ENCODE measurements at regions of chr19 and their contacts with region 1.

Region 1: DNA sequence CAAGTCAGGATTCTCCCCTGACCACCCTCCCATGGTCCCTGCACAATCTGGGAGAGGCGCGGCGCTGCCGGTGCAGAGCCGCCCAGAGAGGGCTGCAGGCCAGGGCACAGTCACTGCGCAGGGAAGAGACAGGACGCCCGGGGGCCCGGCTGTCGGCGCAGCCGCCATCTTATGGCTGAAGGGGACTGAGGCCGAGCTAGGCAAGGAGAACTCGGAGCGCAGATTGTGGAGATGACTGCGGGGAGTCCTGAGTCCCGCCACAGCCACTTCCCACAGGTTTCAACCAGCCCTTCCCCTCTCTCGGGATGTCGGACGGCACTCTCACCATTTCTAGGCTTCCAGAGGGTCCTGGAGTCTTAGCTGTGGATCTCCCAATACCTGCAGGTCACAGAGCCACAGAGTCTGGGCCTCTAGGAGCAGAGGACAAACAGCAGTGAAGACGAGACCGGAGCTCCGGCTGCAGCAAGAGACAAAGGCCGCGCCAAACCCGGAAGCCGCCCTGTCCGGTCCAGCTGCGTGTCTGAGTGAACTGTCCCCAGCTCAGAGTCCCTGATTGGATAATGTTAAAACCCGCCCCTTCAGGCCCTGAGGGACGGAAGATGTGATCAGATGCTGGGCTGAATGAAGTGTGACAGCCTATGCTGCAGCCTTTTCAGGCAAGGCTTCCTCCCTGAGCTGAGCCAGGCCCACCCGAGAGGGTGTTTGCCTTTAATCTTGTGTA is at the start of gene ZNF708:
- H3K4me3 ChIP-seq: peak within 1 kb of the TSS; percentile 88
- H3K27ac ChIP-seq: peak within 1 kb of the TSS; percentile 75
- H3K4me1 ChIP-seq: no peaks in the 10 kb centered on the region
- CTCF ChIP-seq: no peak

Region 2: DNA sequence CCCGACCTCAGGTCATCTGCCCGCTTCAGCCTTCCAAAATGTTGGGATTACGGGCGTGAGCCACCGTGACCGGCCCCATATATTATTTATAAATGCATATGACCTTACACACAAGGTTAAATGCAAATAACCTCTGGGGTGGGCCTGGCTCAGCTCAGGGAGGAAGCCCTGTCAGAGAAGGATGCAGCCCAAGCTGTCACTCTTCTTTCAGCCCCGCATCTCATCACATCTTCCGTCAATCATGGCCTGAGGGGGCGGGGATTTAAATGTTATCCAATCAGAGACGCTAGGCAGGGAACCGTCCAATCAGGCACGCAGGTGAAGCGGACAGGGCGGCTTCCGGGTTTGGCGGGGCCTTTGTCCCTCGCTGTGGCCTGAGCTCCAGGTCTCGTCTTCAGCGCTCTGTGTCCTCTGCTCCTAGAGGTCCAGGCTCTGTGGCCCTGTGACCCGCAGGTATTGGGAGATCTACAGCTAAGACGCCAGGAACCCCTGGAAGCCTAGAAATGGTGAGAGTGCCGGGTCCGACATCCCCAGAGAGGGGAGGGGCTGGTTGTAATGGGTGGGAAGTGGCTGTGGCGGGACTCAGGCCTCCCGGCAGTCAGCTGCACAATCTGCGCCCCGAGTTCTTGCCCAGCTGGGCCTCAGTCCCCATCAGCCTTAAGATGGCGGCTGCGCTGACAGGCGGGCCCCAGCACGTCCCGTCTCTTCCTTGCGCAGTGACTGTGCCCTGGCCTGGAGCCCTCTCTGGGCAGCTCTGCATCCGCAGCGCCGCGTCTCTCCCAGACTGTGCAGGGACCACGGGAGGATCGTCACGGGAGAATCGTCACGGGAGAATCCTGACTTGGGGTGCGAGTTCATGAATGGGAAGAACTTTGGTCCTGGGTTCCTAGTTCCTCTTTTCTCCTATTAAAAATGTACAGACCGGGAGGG is 308.5 kb before region 1 on chr19 and contains the start of gene ZNF430:
- CTCF ChIA-PET with region 1: no interaction called
- POLR2A ChIA-PET with region 1: interaction called, 12 read pairs
- H3K4me3 ChIP-seq: peak within 1 kb of the TSS; percentile 93
- H3K27ac ChIP-seq: peak within 1 kb of the TSS; percentile 84
- H3K4me1 ChIP-seq: no peaks in the 10 kb centered on the region
- CTCF ChIP-seq: no peak

Region 3: DNA sequence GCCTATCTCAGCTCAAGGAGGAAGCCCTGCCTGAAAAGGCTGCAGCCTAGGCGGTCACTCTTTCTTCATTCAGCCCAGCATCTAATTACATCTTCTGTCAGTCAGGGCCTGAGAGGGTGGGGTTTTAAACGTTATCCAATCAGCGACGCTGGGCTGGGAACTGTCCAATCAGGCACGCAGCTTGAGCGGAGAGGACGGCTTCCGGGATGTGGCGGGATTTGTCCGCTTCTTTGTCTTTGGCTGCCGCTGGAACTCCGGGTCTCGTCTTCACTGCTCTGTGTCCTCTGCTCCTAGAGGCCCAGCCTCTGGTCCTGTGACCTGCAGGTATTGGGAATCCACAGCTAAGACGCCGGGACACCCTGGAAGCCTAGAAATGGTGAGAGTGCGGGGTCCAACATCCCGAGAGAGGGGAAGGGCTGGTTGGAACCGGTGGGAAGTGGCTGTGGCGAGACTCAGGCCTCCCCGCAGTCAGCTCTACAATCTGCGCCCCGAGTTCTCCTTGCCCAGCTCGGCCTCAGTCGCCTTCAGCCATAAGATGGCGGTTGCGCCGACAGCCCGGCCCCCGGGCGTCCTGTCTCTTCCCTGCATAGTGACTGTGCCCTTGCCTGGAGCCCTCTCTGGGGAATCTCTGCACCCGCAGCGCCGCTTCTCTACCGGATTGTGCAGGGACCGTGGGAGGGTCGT is 29.9 kb after region 1 on chr19 and contains the start of gene ZNF738:
- CTCF ChIA-PET with region 1: no interaction called
- POLR2A ChIA-PET with region 1: interaction called, 30 read pairs
- H3K4me3 ChIP-seq: peak within 1 kb of the TSS; percentile 79
- H3K27ac ChIP-seq: peak within 1 kb of the TSS; percentile 80
- H3K4me1 ChIP-seq: no peaks in the 10 kb centered on the region
- CTCF ChIP-seq: no peak

Region 4: GRCh38 chr19:21396893-21397572 is 68.0 kb after region 1 on chr19 and contains the start of gene ZNF493:
- CTCF ChIA-PET with region 1: no interaction called
- POLR2A ChIA-PET with region 1: interaction called, 16 read pairs
- H3K4me3 ChIP-seq: peak within 1 kb of the TSS; percentile 97
- H3K27ac ChIP-seq: no peak within 1 kb of the TSS; the same call in 1 of the 2 replicates
- H3K4me1 ChIP-seq: no peaks in the 10 kb centered on the region
- CTCF ChIP-seq: no peak

Region 5: GRCh38 chr19:21505459-21506451 is 176.7 kb after region 1 on chr19 and contains the start of gene ZNF429:
- CTCF ChIA-PET with region 1: no interaction called
- POLR2A ChIA-PET with region 1: interaction called, 16 read pairs
- H3K4me3 ChIP-seq: peak within 1 kb of the TSS; percentile 81
- H3K27ac ChIP-seq: no peak within 1 kb of the TSS
- H3K4me1 ChIP-seq: no peaks in the 10 kb centered on the region
- CTCF ChIP-seq: peak; percentile 13; the same call in 1 of the 2 replicates

Measured in HEK293 (cell line).